Breast epithelium (tissue), 4 donors: ENCODE measurements at regions of chr4 and their contacts with region 1.

Region 1: DNA sequence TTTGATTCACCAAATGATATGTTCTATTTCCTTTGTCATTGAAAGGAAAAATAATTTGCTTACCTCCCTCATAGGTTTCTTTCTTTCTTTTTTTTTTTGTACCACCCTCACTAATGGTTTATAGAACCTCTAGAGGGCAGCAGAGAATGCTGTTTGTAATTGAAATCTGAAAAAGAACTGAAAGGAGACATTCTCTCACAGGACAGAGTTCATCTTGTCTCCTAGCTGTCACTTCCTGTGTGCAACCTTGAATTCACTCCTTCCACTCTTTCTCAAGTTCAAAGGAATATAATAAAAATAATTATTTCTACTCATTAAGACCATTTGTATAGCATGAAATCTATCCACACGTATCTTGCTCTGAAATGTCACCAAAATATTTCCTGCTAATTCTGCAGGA is 51.0 kb downstream of the GUCY1B1 start:
- DNase-seq: no peak
- H3K4me3 ChIP-seq: no peak overlapping the region
- H3K27ac ChIP-seq: no peak overlapping the region
- H3K4me1 ChIP-seq: no peaks in the 10 kb centered on the region
- H3K27me3 ChIP-seq: no peaks in the 10 kb centered on the region
- CTCF ChIP-seq: peak; percentile 20 to 43 (median 33)
- POLR2A ChIP-seq: no peak

Region 2: DNA sequence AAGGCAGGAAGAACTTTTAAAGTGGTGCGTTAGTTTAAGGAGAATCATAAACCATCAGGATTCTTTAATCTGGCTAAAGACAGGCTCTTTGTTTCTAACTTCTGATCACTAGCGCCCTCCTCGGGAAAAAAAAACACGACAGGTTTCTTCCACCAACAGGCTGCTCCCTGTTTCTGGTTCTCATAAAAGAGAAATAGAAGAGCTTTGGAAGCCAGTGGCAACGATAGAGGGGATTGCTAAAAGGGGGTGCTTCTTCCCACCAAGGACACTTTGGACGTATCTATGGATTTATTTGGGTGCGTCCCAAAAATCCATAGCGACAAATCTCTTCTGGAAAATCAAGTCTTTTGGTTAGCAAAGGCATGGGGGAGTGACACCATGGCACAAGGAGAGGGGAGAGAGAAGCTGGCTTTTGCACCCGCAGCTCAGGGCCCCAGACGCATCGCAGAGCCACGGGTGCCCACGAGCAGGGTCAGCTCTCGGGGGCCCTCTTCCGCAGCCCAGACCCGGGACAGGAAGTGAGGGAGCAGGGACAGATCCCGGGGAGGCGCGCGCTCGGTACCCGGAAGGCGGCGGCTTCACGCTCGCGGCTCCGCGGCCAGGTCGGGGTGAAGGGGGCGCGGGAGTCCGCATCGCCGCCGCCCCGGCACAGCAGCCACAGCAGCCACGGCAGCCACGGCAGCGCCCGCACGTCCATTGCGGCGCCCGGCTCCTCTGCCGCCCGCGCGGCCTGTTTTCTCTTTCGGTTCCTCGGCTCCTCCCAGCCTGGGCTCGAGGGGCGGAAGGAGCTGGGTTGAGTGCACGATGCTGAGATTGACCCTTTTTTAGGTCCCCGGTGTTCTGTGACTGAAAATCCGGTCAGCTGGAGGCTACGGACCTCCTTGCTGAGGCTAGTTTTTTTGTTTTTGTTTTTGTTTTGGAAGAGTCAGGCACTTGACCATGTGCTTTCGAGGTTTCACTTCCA is 143.6 kb after region 1 on chr4 and contains the start of gene CTSO:
- intact Hi-C with region 1: loop called (anchors 10 kb)
- DNase-seq: peak; percentile 55 to 65
- H3K4me3 ChIP-seq: peak within 1 kb of the TSS; percentile 76 to 79 (median 76)
- H3K27ac ChIP-seq: peak within 1 kb of the TSS; percentile 98 to 99
- H3K4me1 ChIP-seq: no peaks in the 10 kb centered on the region
- H3K27me3 ChIP-seq: no peaks in the 10 kb centered on the region
- CTCF ChIP-seq: peak; percentile 57 to 64 (median 60)
- POLR2A ChIP-seq: no peak
- total RNA-seq, gene CTSO: 19.4 to 37.5 (median 20.0) TPM